HEK293 (cell line): ENCODE measurements at regions of chr6 and their contacts with region 1.

Region 1: DNA sequence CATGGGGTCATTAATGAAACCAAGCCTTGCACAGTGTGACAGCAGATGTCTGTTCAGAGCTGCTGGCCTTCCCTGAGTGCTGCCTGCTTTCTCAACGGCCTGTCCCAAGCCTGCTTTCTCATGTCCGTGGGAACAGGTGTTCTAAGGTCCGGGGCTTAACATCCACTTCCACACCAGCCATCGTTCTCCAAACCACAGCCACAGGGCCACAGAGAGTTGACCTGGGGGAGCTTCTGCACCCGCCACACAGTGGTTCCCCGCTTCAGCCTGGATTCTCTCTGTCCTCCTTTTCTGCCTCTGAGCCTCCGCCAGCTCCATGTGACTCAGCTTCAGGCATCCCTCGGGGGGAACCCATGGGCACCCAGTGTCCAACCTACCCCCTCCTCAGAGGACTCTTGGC is 26.9 kb upstream of the PPP1R3G start:
- H3K4me3 ChIP-seq: no peak overlapping the region
- H3K27ac ChIP-seq: no peak overlapping the region
- H3K4me1 ChIP-seq: no peaks in the 10 kb centered on the region
- CTCF ChIP-seq: no peak

Region 2: GRCh38 chr6:4889701-4890100 is 168.6 kb before region 1 on chr6:
- CTCF ChIA-PET with region 1: no interaction called
- POLR2A ChIA-PET with region 1: no interaction called
- H3K4me3 ChIP-seq: no peak overlapping the region
- H3K27ac ChIP-seq: no peak overlapping the region
- H3K4me1 ChIP-seq: no peaks in the 10 kb centered on the region
- CTCF ChIP-seq: no peak

Region 3: DNA sequence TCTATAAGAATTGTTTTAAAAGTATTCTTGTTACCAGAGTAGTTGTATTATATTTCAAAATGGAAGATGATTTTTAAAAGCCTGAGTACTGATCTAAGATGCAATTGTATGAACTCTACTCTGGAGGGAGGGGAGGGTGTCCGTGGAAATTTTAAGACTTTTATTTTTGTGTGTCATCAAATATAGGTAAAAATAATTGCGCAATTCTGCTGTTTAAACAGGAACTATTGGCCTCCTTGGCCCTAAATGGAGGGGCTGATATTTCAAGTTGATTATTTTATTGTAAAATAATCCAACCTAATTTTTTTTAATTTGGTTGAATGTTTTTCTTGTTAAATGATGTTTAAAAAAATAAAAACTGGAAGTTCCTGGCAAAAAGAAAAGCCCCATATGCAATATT is 16.3 kb before region 1 on chr6:
- CTCF ChIA-PET with region 1: interaction called, 11 read pairs
- POLR2A ChIA-PET with region 1: no interaction called
- H3K4me3 ChIP-seq: no peak overlapping the region
- H3K27ac ChIP-seq: no peak overlapping the region
- H3K4me1 ChIP-seq: no peaks in the 10 kb centered on the region
- CTCF ChIP-seq: no peak

Region 4: GRCh38 chr6:5214570-5215052 is 156.4 kb after region 1 on chr6:
- CTCF ChIA-PET with region 1: interaction called, 17 read pairs
- POLR2A ChIA-PET with region 1: no interaction called
- H3K4me3 ChIP-seq: no peak overlapping the region
- H3K27ac ChIP-seq: no peak overlapping the region
- H3K4me1 ChIP-seq: no peaks in the 10 kb centered on the region
- CTCF ChIP-seq: peak; percentile 77